ENCODE measurements at regions of chr3 and their contacts with region 1.

Region 1: GRCh38 chr3:115814778-115815380 is 191.6 kb downstream of the GAP43 start:
- DNase-seq: no peak
- H3K4me3 ChIP-seq: no peak overlapping the region
- CTCF ChIP-seq: peak; percentile 75

Region 2: DNA sequence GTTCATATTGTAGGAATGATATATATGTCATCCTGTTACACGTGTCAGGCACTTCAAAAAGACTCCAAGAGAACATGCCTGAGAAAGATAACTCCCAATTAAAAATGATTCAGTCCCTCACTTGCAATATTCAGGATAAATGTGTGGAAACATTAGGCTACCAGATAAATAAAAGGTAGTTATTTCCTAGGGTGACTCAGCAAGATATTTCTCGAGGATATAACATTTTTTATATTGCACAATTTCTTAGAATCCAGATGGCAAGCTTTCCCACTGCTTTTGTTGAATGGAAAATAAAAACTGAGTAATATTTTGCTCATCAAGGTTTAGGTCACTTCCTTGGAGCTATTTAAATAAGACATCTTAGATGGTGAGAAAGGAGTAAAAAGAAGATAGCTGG is 10.2 kb before region 1 on chr3:
- CTCF ChIA-PET with region 1: interaction called, 10 read pairs
- POLR2A ChIA-PET with region 1: no interaction called
- DNase-seq: peak; percentile 73
- H3K4me3 ChIP-seq: no peak overlapping the region
- CTCF ChIP-seq: no peak

Region 3: GRCh38 chr3:115825046-115825445 is 10.2 kb after region 1 on chr3:
- CTCF ChIA-PET with region 1: interaction called, 42 read pairs
- POLR2A ChIA-PET with region 1: no interaction called
- DNase-seq: no peak
- H3K4me3 ChIP-seq: no peak overlapping the region
- CTCF ChIP-seq: no peak

Measured in AG04449 (cell line).